ENCODE measurements at regions of chr7 and their contacts with region 1.

Region 1: DNA sequence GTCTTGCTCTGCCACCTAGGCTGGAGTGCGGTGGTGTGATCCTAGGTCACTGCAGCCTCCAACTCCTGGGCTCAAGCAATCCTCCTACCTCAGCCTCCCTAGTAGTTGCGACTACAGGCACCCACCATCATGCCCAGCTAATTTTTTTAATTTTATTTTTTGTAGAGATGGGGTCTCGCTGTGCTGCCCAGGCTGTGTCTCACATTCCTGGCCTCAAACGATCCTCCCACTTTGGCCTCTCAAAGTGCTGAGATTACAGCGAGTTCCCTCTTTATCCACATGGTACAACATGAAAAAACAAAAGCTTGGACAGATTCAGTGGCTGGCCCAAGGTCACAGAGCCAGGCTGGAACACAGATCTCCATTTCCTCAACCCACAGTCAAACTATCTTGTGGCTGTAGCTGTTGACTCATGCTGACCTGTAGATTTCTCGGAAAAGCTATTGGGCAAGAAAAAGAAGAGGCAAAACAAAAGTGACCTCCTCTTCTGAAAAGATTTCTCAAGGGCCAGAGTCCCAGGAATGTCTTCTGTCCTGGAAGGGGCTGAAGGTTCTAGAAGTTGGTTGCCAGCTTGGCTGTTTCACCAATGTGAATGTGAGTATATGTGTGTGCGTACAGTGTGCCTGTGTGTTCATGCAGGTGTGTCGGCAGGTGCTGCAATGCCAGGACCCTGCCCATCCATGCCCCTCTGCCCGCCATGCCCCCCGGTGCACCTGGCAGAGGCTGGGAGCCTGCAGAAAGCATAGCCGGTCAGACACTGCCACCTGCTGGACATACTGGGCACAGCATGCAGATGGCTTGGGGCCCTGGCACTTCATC is 28.4 kb downstream of the TMEM130 start:
- DNase-seq: no peak
- H3K4me3 ChIP-seq: no peak overlapping the region
- H3K27ac ChIP-seq: peak overlapping the region; percentile 61
- H3K27me3 ChIP-seq: no peaks in the 10 kb centered on the region
- CTCF ChIP-seq: peak; percentile 99

Region 2: DNA sequence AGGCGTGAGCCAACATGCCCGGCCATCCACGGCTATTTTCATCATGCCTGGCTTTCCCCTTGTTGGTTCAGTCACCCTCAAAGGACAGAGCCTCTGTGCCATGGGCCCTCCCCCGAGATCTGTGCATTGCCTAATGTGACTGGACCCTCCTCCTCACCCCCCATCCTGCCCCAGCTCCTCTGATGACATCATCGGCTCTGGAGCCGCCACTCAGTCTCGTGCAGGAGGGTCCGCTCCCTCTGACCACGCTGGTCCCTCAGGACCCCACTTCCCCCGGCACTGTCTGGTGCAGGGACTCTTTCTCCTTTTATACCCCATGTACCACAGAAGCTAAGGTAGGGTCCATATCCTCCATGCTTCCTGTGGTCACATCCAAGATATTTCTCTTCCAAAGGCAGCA is 407.3 kb before region 1 on chr7:
- CTCF ChIA-PET with region 1: interaction called, 44 read pairs
- POLR2A ChIA-PET with region 1: no interaction called
- DNase-seq: no peak
- H3K4me3 ChIP-seq: no peak overlapping the region
- H3K27ac ChIP-seq: no peak overlapping the region
- H3K27me3 ChIP-seq: no peaks in the 10 kb centered on the region
- CTCF ChIP-seq: no peak

Region 3: GRCh38 chr7:98821348-98821747 is 20.0 kb before region 1 on chr7:
- CTCF ChIA-PET with region 1: interaction called, 11 read pairs
- POLR2A ChIA-PET with region 1: no interaction called
- DNase-seq: no peak
- H3K4me3 ChIP-seq: no peak overlapping the region
- H3K27ac ChIP-seq: no peak overlapping the region
- H3K27me3 ChIP-seq: no peaks in the 10 kb centered on the region
- CTCF ChIP-seq: no peak

Region 4: GRCh38 chr7:98852826-98853225 is 11.4 kb after region 1 on chr7:
- CTCF ChIA-PET with region 1: interaction called, 28 read pairs
- POLR2A ChIA-PET with region 1: no interaction called
- DNase-seq: no peak
- H3K4me3 ChIP-seq: no peak overlapping the region
- H3K27ac ChIP-seq: peak overlapping the region; percentile 97
- H3K27me3 ChIP-seq: no peaks in the 10 kb centered on the region
- CTCF ChIP-seq: no peak

Measured in AG04450 (cell line).